Activated T-helper 1 cell treated with anti-CD3 and anti-CD28 coated beads, Interleukin-12 subunit alpha, Interleukin-12 subunit beta, Interleukin-2, Interleukin-4 antibody, amounts not matched to agents 30 ng/mL and 10 ng/mL and 1 ng/mL, durations not matched to agents 14 hours and 24 hours and 36 hours (primary cell): ENCODE measurements at regions of chr1 and their contacts with region 1.

Region 1: GRCh38 chr1:2300851-2301606 is 72.9 kb downstream of the SKI start:
- DNase-seq: peak; percentile 77
- H3K4me3 Mint-ChIP-seq: peak overlapping the region; percentile 77
- H3K27ac Mint-ChIP-seq: peak overlapping the region; percentile 91
- H3K4me1 Mint-ChIP-seq: peaks cover 35% of the 10 kb centered on the region
- H3K27me3 Mint-ChIP-seq: no peaks in the 10 kb centered on the region

Region 2: GRCh38 chr1:2163205-2163604 is 137.8 kb before region 1 on chr1:
- intact Hi-C with region 1: no loop called
- DNase-seq: no peak
- H3K4me3 Mint-ChIP-seq: no peak overlapping the region
- H3K27ac Mint-ChIP-seq: no peak overlapping the region
- H3K4me1 Mint-ChIP-seq: no peaks in the 10 kb centered on the region
- H3K27me3 Mint-ChIP-seq: no peaks in the 10 kb centered on the region

Region 3: DNA sequence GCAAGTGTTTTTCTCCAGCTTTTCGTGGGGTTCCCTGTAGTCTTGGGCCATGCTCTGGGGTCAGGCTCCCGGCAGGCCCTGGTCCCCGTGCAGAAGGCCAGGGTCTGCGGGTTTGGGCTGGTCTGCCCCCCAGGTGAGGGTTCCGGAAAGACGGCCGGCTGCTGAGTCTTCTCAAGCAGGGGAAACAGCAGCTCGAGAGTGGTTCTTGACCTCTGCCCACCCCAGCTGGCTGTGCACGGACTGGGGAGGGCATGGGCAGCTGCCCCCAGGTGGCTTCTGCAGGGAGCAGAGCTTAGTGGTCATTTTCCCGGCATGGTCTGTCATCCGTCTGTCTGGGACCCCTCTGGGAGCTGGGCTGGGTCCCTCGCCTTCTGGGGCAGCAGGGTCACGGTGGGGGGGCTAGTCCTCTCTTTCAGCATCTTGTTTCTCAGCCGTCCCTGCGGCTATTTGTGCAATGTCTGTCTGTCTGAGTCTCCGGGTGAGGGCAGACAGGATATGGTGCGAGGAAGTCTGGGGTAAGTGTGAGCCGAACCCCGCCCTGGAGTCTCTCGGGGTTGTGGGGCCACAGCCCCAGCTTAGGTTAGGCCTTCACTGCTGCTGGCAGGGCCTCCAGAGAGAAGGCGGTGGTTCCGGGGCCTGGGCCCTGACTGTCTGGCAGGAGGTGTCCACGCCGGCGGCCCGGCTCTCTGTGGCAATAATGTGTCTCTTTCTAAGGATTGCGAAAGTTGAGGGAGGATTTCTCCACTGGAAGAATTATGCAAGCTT is 66.8 kb before region 1 on chr1:
- intact Hi-C with region 1: loop called (anchors 1 kb)
- DNase-seq: peak; percentile 68
- H3K4me3 Mint-ChIP-seq: peak overlapping the region; percentile 93
- H3K27ac Mint-ChIP-seq: peak overlapping the region; percentile 78
- H3K4me1 Mint-ChIP-seq: peaks cover 71% of the 10 kb centered on the region
- H3K27me3 Mint-ChIP-seq: no peaks in the 10 kb centered on the region

Region 4: DNA sequence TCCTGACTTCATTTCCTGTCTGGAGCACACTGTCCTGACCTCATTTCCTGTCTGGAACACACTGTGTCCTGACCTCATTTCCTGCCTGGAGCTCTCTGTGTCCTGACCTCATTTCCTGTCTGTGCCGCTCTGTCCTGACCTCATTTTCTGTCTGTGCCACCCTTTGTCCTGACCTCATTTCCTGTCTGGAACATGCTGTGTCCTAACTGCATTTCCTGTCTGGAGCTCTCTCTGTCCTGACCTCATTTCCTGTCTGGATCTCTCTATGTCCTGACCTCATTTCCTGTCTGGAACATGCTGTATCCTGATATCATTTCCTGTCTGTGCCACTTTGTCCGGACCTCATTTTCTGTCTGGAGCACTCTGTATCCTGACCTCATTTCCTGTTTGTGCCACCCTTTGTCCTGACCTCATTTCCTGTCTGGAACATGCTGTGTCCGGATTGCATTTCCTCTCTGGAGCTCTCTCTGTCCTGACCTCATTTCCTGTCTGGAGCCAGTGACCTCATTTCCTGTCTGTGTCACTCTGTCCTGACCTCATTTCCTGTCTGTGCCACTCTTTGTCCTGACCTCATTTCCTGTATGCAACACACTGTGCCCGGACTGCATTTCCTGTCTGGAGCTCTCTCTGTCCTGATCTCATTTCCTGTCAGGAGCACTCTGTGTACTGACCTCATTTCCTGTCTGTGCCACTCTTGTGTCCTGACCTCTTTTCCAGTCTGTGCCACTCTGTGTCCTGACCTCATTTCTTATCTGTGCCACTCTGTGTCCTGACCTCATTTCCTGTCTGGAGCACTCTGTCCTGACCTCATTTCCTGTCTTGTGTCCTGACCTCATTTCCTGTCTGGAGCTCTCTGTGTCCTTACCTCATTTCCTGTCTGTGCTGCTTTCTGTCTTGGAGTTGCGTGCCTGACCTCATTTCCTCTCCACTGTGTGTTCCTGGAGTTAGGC is 45.3 kb before region 1 on chr1:
- intact Hi-C with region 1: loop called (anchors 2 kb)
- DNase-seq: peak; percentile 73
- H3K4me3 Mint-ChIP-seq: no peak overlapping the region
- H3K27ac Mint-ChIP-seq: no peak overlapping the region
- H3K4me1 Mint-ChIP-seq: peaks cover 39% of the 10 kb centered on the region
- H3K27me3 Mint-ChIP-seq: no peaks in the 10 kb centered on the region

Region 5: DNA sequence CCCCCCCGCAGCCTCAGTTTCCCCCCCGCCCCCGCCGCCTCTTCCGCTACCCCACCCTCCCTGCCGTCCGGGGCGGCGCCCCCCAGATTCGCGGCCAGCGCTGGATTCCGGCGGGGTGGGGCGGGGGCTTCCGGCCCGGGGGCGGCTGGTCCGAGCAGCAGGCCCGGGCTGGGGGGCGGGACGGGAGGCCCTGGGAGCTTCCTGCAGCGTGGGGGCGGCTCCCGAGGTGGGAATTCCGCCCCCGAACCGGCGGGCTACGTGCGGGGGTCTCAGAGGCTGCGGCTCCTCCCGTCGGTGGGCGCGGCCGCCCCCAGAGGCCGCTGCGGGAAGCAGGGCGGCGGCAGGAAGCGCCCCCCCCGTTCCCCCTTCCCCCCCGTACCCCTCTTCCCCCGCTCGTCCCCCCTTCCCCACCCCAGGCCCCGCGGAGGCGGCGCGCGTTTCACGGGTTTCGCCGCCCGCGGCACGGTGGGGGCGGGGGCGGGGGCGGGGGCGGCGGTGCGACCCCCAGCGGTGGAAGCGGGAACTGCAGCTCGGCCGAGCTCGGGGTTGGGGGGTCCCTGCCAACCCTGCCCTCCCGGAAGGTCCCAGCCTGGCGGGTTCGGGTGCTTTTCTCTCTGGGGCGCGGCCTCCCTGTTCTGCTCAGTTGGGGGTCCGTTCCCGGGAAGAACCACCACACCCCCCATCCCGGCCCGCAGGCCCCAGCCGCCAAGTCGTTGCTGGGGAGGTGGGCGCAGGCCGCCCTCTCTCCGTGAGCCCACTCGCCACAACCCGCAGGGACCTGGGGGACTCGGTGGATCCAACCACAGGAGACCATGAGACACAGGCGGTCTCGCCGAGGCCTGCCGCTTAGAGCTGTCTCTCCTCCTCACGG is 14.0 kb after region 1 on chr1:
- intact Hi-C with region 1: loop called (anchors 2 kb)
- DNase-seq: peak; percentile 45
- H3K4me3 Mint-ChIP-seq: no peak overlapping the region
- H3K27ac Mint-ChIP-seq: peak overlapping the region; percentile 63
- H3K4me1 Mint-ChIP-seq: no peaks in the 10 kb centered on the region
- H3K27me3 Mint-ChIP-seq: no peaks in the 10 kb centered on the region

Region 6: DNA sequence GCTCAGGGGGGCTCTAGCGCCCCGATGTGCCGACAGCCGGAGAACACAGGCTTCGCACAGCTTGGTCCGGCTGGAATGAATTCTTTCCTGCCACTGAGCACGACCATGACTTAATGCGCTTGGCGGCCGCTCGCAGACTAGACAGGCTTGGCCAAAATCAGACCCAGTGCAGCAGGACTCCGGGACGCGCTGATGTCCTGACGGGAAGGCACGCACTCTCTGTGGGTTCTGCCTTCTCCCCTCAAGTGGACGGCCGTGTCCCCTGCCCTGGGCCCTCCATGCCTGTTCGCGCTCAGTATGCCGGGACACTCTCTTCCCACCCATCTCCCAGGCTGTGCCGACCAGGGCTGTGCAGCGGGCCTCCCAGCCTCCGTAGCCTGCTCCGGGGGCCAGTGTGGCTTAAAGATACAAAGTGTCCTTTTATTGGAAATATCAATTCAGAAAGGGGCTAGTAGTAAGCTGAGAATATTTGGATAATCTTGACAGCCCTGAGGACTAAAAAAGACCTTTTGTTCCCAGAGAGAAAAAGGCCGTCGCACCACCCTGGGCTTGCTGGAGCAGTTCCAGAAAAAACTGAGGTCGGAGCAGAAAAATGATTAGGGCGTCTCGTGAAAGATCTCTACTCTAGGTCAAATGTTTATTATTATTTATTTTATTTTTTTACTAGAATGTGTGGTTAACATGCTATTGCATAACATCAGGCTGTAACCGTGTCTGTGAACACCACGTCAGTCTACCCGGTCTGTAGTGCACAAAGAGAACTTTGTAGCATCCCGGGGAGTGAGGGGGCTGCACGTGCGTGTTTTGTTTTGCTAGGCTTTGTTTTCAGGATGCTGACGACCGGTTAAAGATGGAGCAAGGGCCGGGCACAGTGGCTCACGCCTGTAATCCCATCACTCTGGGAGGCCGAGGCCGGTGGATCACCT is 1065.4 kb after region 1 on chr1:
- intact Hi-C with region 1: no loop called
- DNase-seq: no peak
- H3K4me3 Mint-ChIP-seq: no peak overlapping the region
- H3K27ac Mint-ChIP-seq: no peak overlapping the region
- H3K4me1 Mint-ChIP-seq: no peaks in the 10 kb centered on the region
- H3K27me3 Mint-ChIP-seq: no peaks in the 10 kb centered on the region